OCI-LY7 (cell line): ENCODE measurements at regions of chr2 and their contacts with region 1.

Region 1: GRCh38 chr2:226791487-226792081 is 8.0 kb downstream of the IRS1 start:
- DNase-seq: peak; percentile 92
- H3K4me3 ChIP-seq: peak overlapping the region; percentile 73
- H3K27ac ChIP-seq: peak overlapping the region; percentile 79
- H3K4me1 ChIP-seq: peaks cover 58% of the 10 kb centered on the region
- CTCF ChIP-seq: peak; percentile 43; the same call in 1 of the 2 replicates

Region 2: GRCh38 chr2:226772389-226773179 is 19.0 kb before region 1 on chr2:
- CTCF ChIA-PET with region 1: interaction called, 3 read pairs
- POLR2A ChIA-PET with region 1: interaction called, 122 read pairs
- intact Hi-C with region 1: loop called (anchors 1 kb)
- DNase-seq: peak; percentile 95
- H3K4me3 ChIP-seq: peak overlapping the region; percentile 56
- H3K27ac ChIP-seq: peak overlapping the region; percentile 90
- H3K4me1 ChIP-seq: peaks cover 61% of the 10 kb centered on the region
- CTCF ChIP-seq: no peak

Region 3: DNA sequence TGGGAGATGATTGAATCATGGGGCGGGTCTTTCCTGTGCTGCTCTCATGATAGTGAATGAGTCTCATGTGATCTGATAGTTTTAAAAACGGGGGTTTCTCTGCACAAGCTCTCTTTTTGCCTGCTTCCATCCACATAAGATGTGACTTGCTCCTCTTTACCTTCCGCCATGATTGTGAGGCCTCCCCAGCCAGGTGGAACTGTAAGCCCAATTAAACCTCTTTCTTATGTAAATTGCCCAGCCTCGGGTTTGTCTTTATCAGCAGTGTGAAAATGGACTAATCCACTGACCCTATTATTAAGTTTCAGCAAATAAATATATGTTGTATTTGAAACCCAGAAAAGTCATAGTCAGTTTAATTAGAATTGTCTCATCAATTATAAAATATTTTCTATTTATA is 14.0 kb before region 1 on chr2:
- CTCF ChIA-PET with region 1: interaction called, 3 read pairs
- POLR2A ChIA-PET with region 1: interaction called, 122 read pairs
- intact Hi-C with region 1: loop called (anchors 1 kb)
- DNase-seq: no peak
- H3K4me3 ChIP-seq: no peak overlapping the region
- H3K27ac ChIP-seq: no peak overlapping the region
- H3K4me1 ChIP-seq: peaks cover 43% of the 10 kb centered on the region
- CTCF ChIP-seq: no peak